A549 (cell line): ENCODE measurements at regions of chr12 and their contacts with region 1.

Region 1: GRCh38 chr12:57632694-57633477 is at the start of gene B4GALNT1:
- DNase-seq: peak; percentile 76 to 86
- ATAC-seq: peak; percentile 87 to 91
- H3K4me3 ChIP-seq: peak within 1 kb of the TSS; percentile 83
- H3K27ac ChIP-seq: peak within 1 kb of the TSS; percentile 94
- H3K4me1 ChIP-seq: peaks cover 13% of the 10 kb centered on the region
- CTCF ChIP-seq: peak; percentile 78
- EP300 ChIP-seq: no peak
- POLR2A ChIP-seq: peak; percentile 56
- RAD21 ChIP-seq: peak; percentile 55 to 60
- polyA plus RNA-seq, gene B4GALNT1: 25.7 and 27.0 TPM in 2 replicates

Region 2: GRCh38 chr12:57498132-57498502 is 134.8 kb before region 1 on chr12:
- CTCF ChIA-PET with region 1: no interaction called
- POLR2A ChIA-PET with region 1: interaction called, 13 read pairs
- DNase-seq: no peak
- ATAC-seq: peak; percentile 62 to 68; a peak in 5 of 6 replicates
- H3K4me3 ChIP-seq: no peak overlapping the region
- H3K27ac ChIP-seq: no peak overlapping the region
- H3K4me1 ChIP-seq: no peaks in the 10 kb centered on the region
- CTCF ChIP-seq: no peak
- EP300 ChIP-seq: no peak
- POLR2A ChIP-seq: no peak
- RAD21 ChIP-seq: no peak

Region 3: GRCh38 chr12:57590536-57591479 is 42.1 kb before region 1 on chr12 and contains the start of gene PIP4K2C:
- CTCF ChIA-PET with region 1: interaction called, 76 read pairs
- POLR2A ChIA-PET with region 1: interaction called, 3 read pairs
- DNase-seq: peak; percentile 79 to 80
- ATAC-seq: peak; percentile 87 to 94
- H3K4me3 ChIP-seq: peak within 1 kb of the TSS; percentile 94
- H3K27ac ChIP-seq: peak within 1 kb of the TSS; percentile 84 to 91
- H3K4me1 ChIP-seq: peaks cover 12% of the 10 kb centered on the region
- CTCF ChIP-seq: no peak
- EP300 ChIP-seq: no peak
- POLR2A ChIP-seq: peak; percentile 77
- RAD21 ChIP-seq: no peak
- polyA plus RNA-seq, gene PIP4K2C: 60.9 and 62.9 TPM in 2 replicates

Region 4: DNA sequence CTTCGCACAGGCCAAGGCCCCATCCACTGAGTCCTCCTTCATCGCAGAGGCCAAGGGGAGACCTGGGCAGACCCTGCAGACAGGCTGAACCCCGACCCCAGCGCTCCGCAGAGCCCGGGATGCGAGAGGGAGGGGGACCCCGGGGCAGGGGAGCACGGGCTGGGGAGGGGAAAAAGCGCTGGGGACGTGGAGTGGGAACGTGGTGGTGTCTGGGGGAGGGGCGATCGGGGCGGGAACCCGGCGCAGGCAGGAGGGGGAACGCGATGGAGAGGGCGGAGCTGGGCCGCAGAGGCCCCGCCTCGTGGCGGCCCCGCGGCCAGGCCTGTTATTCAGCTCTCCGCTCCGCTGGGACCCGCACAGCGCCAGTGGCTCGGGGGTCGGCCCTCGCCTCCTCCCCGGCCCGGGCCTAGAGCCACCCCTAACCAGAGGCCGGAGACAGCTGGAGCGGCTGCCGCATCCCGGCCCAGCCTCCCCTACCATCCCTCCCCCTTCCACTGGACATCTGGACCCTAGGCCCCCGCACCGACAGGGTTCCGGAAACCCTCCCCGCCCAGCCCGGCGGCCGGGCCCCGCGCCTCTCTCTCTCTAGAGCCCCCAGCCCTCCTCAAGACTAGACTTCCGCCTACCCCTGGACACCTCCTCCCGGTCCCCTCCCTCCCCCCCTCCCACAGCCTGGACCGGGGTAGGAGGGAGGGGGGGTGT is 21.6 kb before region 1 on chr12 and contains the start of gene ARHGEF25:
- CTCF ChIA-PET with region 1: interaction called, 16 read pairs
- POLR2A ChIA-PET with region 1: interaction called, 3 read pairs
- DNase-seq: peak; percentile 48 to 84
- ATAC-seq: peak; percentile 81 to 91
- H3K4me3 ChIP-seq: peak within 1 kb of the TSS; percentile 61
- H3K27ac ChIP-seq: peak within 1 kb of the TSS; percentile 81 to 95
- H3K4me1 ChIP-seq: peaks cover 11% of the 10 kb centered on the region; the same call in 2 of the 3 replicates
- CTCF ChIP-seq: no peak
- EP300 ChIP-seq: no peak
- POLR2A ChIP-seq: peak; percentile 66
- RAD21 ChIP-seq: no peak
- polyA plus RNA-seq, gene ARHGEF25: 9.3 and 9.9 TPM in 2 replicates

Region 5: DNA sequence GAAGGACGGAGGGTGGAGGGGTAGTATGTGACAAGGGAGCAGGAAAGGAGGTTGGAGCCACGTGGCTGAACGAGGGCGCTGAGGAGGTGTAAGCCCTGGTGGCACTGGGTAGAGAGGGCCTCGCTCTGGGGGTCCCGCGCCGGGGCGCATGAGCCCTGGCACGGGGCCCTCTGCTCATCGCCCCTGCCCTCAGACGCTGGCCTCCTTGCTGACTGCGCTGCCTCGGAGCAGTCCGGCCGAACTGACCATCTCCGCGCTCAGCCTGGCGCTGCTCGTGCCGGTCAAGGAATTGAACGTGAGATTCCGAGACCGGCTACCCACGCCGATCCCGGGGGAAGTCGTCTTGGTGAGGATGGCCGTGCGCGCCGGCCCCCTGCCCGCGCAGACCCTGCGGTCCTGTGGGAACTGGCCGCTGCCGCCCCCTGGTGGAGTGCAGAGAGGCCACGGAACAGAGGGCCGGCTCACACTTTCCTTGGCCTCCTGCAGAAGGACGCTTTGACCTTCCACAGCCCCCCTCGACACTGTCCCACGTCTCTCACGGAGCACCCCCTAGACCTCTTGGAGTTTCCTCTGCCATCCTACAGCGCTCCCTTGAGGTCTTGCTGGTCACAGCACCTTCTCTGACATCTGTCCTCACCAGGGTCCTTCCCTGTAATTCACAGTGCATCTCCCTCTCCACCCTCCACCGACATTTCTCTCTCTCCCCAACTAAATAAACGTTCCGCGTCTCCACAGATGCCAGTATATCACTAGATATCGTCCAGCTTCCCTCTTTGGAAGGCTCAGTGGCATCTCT is 11.2 kb before region 1 on chr12:
- CTCF ChIA-PET with region 1: interaction called, 24 read pairs
- POLR2A ChIA-PET with region 1: no interaction called
- DNase-seq: peak; percentile 64 to 88
- ATAC-seq: peak; percentile 76 to 92
- H3K4me3 ChIP-seq: peak overlapping the region; percentile 53
- H3K27ac ChIP-seq: peak overlapping the region; percentile 54 to 76; a peak in 5 of 6 replicates
- H3K4me1 ChIP-seq: peaks cover 10% of the 10 kb centered on the region; the same call in 1 of the 3 replicates
- CTCF ChIP-seq: peak; percentile 96
- EP300 ChIP-seq: no peak
- POLR2A ChIP-seq: no peak
- RAD21 ChIP-seq: peak; percentile 71 to 84

Region 6: DNA sequence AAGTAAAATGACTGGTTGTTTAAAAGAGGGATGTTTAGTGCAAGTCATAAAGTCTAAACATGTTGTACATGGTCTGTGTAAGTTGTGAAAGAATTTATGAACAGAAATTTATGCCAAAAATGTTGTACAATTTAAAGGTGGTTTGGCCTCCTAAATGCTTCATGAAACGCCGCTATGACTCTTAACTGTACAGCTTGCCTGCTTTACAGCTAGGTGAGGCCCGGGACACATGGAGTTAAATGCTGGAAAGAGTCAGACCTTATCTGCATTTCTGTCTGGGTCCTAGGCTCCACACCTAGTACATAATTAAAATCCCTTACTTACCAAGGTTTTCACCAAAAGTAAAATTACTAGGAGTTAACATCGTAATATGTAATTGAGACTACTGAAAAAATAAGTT is 28.5 kb after region 1 on chr12:
- CTCF ChIA-PET with region 1: interaction called, 13 read pairs
- POLR2A ChIA-PET with region 1: no interaction called
- DNase-seq: no peak
- ATAC-seq: no peak
- H3K4me3 ChIP-seq: no peak overlapping the region
- H3K27ac ChIP-seq: no peak overlapping the region
- H3K4me1 ChIP-seq: no peaks in the 10 kb centered on the region
- CTCF ChIP-seq: no peak
- EP300 ChIP-seq: no peak
- POLR2A ChIP-seq: no peak
- RAD21 ChIP-seq: no peak

Region 7: DNA sequence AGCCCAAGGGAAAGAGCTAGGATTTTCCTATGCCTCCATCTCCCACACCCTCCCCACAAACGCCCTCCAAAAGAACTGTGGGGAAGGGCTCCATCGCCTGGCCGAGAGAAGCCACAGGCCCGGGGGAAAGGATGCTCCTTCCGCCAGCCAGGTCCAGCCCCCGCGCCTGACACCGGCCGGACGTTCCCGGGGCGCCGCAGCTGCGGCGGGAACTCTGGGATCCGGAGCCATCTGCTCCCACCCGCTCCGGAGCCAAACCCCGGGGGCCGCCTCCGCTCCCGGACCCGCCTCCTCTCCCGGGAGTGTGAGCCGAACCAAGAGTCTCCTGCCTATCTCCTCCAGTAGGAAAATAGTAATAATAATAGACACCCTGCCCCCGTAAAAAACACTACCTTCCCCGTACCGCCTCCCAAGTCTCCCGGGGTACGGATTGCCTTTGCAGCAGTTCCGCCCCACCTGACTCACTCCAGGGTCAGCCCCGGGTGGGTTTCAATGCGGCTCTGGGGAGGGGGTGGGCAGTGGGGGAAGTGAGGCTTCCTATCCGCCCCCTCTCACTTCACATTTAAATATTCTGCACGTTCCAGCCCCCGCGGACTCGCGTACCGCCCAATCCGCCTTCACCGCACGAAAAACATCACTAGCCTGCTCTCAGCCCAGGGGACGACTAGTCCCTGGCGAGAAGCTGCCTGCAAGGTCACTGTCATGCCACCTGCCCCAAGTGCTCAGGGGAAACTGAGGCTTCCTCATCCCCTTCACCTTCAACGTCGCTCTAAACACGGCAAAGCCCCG is 103.3 kb after region 1 on chr12:
- CTCF ChIA-PET with region 1: interaction called, 11 read pairs
- POLR2A ChIA-PET with region 1: no interaction called
- DNase-seq: peak in 1 of 2 experiments; percentile 67
- ATAC-seq: peak; percentile 61 to 83
- H3K4me3 ChIP-seq: peak overlapping the region; percentile 60
- H3K27ac ChIP-seq: peak overlapping the region; percentile 39 to 74; a peak in 5 of 6 replicates
- H3K4me1 ChIP-seq: peaks cover 27% of the 10 kb centered on the region
- CTCF ChIP-seq: peak; percentile 46
- EP300 ChIP-seq: no peak
- POLR2A ChIP-seq: no peak
- RAD21 ChIP-seq: peak; percentile 54 to 60; a peak in 4 of 5 replicates